ENCODE measurements at regions of chr2 and their contacts with region 1.

Region 1: DNA sequence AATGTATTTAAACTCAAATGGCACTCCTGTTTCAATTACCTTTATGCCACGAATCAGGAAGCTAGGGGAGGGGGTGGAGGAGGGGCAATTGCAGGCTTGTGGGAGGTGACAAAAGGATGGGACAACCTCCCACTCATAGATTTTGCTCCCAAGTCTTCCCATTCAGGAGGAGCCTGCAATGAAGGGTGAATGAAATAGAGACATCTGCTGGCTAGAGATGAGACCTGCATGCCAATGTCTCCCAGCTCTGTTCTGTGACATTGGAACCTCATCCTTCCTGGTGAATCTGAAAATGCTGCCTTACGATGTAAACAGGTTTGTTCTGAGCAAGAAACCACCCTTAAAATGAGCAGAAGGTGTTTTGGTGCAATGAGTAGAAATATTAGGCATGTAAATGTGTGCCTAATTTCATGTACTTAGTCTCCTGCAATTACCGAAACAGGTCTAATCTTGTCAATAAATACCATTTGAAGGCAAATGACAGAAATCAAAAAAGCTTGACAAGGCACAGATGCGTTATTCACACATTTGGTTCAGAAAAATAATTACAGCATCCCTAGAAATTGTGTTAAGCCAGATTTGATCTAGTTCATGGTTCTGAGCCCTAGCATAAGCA is 2.7 kb upstream of the PID1 start:
- DNase-seq: no peak
- H3K4me3 ChIP-seq: peak overlapping the region; percentile 29 to 48 (median 36)
- H3K27ac ChIP-seq: peak overlapping the region in 1 of 4 donors; percentile 38
- H3K4me1 ChIP-seq: peaks cover 7 to 25% (median 19%) of the 10 kb centered on the region in 4 donors
- H3K27me3 ChIP-seq: peaks cover 0 to 16% (median 0%) of the 10 kb centered on the region in 4 donors
- CTCF ChIP-seq: peak; percentile 64 to 80 (median 71)
- EP300 ChIP-seq: no peak
- POLR2A ChIP-seq: no peak

Region 2: DNA sequence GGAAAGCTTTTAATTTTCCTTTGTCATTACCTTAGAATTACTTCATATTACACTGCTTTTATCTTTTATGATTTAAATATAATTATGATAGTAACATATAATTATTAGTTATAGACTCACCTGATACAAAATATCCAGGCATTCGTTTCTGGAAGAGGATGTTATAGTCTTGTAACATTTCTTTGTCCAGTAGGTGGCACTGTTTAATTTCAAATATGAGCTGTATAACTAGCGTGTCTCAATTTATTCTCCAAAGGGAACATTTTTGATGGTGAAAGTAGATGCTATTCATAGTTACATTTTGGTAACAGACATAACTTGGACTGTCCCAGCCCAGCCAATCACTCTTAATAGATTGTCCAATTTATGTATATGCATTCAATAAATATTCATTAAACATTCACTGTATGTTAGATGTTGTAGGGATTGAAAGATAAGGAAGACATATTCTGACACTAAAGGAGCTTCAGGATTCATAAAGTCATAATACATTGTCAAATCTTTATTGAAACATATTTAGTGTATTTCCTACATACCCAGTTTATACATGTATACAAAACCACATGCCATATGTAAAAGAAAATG is 1383.2 kb before region 1 on chr2:
- intact Hi-C with region 1: loop called (anchors 2 kb)
- DNase-seq: no peak
- H3K4me3 ChIP-seq: no peak overlapping the region
- H3K27ac ChIP-seq: no peak overlapping the region
- H3K4me1 ChIP-seq: no peaks in the 10 kb centered on the region
- H3K27me3 ChIP-seq: no peaks in the 10 kb centered on the region
- CTCF ChIP-seq: peak; percentile 37 to 69 (median 54)
- EP300 ChIP-seq: no peak
- POLR2A ChIP-seq: no peak

Region 3: DNA sequence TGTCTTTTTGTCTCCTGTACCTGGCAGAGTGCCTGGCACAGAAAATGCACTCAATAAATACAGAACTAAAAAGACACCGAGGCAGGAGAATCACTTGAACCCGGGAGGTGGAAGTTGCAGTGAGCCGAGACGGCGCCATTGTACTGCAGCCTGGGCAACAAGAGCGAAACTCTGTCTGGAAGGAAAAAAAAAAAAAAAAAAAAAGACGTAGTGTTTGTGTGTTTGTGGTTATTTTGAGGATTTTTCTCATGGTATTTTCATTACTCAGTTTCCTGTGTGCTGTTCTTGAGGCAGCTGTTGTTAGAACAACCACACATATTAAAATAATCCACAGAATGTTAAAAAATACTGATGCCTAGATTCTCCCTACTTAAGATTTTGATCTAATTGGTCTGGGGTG is 573.2 kb before region 1 on chr2:
- intact Hi-C with region 1: loop called (anchors 10 kb)
- DNase-seq: no peak
- H3K4me3 ChIP-seq: no peak overlapping the region
- H3K27ac ChIP-seq: no peak overlapping the region
- H3K4me1 ChIP-seq: no peaks in the 10 kb centered on the region
- H3K27me3 ChIP-seq: no peaks in the 10 kb centered on the region
- CTCF ChIP-seq: no peak
- EP300 ChIP-seq: no peak
- POLR2A ChIP-seq: no peak